ENCODE measurements at regions of chr20 and their contacts with region 1.

Region 1: GRCh38 chr20:13302647-13303450 is 81.8 kb downstream of the ISM1 start:
- DNase-seq: peak; percentile 13
- H3K4me3 Mint-ChIP-seq: no peak overlapping the region
- H3K27ac Mint-ChIP-seq: no peak overlapping the region
- H3K4me1 Mint-ChIP-seq: no peaks in the 10 kb centered on the region
- H3K27me3 Mint-ChIP-seq: no peaks in the 10 kb centered on the region

Region 2: GRCh38 chr20:12925214-12925755 is 377.6 kb before region 1 on chr20:
- intact Hi-C with region 1: loop called (anchors 1 kb)
- DNase-seq: no peak
- H3K4me3 Mint-ChIP-seq: no peak overlapping the region
- H3K27ac Mint-ChIP-seq: no peak overlapping the region
- H3K4me1 Mint-ChIP-seq: peaks cover 6% of the 10 kb centered on the region
- H3K27me3 Mint-ChIP-seq: peaks cover 7% of the 10 kb centered on the region

Measured in activated T-helper 1 cell treated with anti-CD3 and anti-CD28 coated beads, Interleukin-12 subunit alpha, Interleukin-12 subunit beta, Interleukin-2, Interleukin-4 antibody, amounts not matched to agents 30 ng/mL and 10 ng/mL and 1 ng/mL, durations not matched to agents 14 hours and 24 hours and 36 hours (primary cell).